Activated T-helper 2 cell treated with anti-CD3 and anti-CD28 coated beads, Interferon-gamma antibody, Interleukin-2, Interleukin-4, amounts not matched to agents 10 μg/mL and 5 μg/mL and 100 μg/mL, durations not matched to agents 14 hours and 24 hours and 36 hours (primary cell): ENCODE measurements at regions of chr3 and their contacts with region 1.

Region 1: GRCh38 chr3:12193485-12194165 is 34.9 kb upstream of the TIMP4 start:
- DNase-seq: peak; percentile 34
- H3K4me3 Mint-ChIP-seq: peak overlapping the region; percentile 54
- H3K27ac Mint-ChIP-seq: peak overlapping the region; percentile 95
- H3K4me1 Mint-ChIP-seq: peaks cover 77% of the 10 kb centered on the region
- H3K27me3 Mint-ChIP-seq: no peaks in the 10 kb centered on the region

Region 2: GRCh38 chr3:11626084-11626463 is 567.6 kb before region 1 on chr3:
- intact Hi-C with region 1: loop called (anchors 10 kb)
- DNase-seq: peak; percentile 22
- H3K4me3 Mint-ChIP-seq: peak overlapping the region; percentile 37
- H3K27ac Mint-ChIP-seq: peak overlapping the region; percentile 87
- H3K4me1 Mint-ChIP-seq: peaks cover 73% of the 10 kb centered on the region
- H3K27me3 Mint-ChIP-seq: no peaks in the 10 kb centered on the region

Region 3: DNA sequence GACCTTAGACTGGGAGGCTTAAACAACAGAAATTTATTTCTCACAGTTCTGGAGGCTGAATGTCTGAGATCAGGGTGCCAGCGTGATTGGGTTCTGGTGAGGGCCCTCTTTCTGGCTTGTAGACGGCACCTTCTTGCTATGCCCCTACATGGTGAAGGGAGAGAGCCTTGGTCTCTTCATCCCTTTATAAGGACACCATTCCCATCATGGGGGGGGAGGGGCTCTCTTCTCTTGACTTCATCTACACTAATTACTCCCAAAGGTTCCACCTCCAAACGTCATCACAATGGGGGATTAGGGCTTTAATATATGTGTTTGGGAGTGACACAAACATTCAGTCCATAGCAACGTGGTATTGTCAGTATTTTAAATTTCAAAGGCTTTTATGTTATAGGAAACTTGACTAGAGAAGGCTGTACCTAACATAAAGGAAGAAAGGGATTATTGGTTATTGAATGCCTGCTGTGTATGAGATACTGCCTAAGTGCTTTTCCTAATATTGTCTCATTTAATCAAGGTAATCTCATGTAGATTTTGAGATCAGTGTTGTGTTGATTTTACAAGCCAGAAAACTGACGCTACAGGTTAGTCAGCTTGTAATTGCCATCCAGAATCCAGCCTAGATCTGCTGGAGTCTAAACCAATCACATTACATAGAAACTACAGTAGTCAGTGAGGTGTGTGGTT is 168.5 kb before region 1 on chr3:
- intact Hi-C with region 1: no loop called
- DNase-seq: no peak
- H3K4me3 Mint-ChIP-seq: no peak overlapping the region
- H3K27ac Mint-ChIP-seq: no peak overlapping the region
- H3K4me1 Mint-ChIP-seq: no peaks in the 10 kb centered on the region
- H3K27me3 Mint-ChIP-seq: peaks cover 2% of the 10 kb centered on the region

Region 4: GRCh38 chr3:12175844-12176453 is 17.7 kb before region 1 on chr3:
- intact Hi-C with region 1: loop called (anchors 1 kb)
- DNase-seq: no peak
- H3K4me3 Mint-ChIP-seq: no peak overlapping the region
- H3K27ac Mint-ChIP-seq: no peak overlapping the region
- H3K4me1 Mint-ChIP-seq: peaks cover 21% of the 10 kb centered on the region
- H3K27me3 Mint-ChIP-seq: no peaks in the 10 kb centered on the region

Region 5: GRCh38 chr3:12221663-12222062 is 28.0 kb after region 1 on chr3:
- intact Hi-C with region 1: loop called (anchors 1 kb)
- DNase-seq: no peak
- H3K4me3 Mint-ChIP-seq: no peak overlapping the region
- H3K27ac Mint-ChIP-seq: no peak overlapping the region
- H3K4me1 Mint-ChIP-seq: peaks cover 13% of the 10 kb centered on the region
- H3K27me3 Mint-ChIP-seq: peaks cover 12% of the 10 kb centered on the region

Region 6: GRCh38 chr3:12287727-12288191 is 94.1 kb after region 1 on chr3:
- intact Hi-C with region 1: loop called (anchors 2 kb)
- DNase-seq: no peak
- H3K4me3 Mint-ChIP-seq: peak overlapping the region; percentile 76
- H3K27ac Mint-ChIP-seq: peak overlapping the region; percentile 42
- H3K4me1 Mint-ChIP-seq: peaks cover 18% of the 10 kb centered on the region
- H3K27me3 Mint-ChIP-seq: peaks cover 33% of the 10 kb centered on the region

Region 7: GRCh38 chr3:12308517-12308916 is 114.9 kb after region 1 on chr3:
- intact Hi-C with region 1: loop called (anchors 1 kb)
- DNase-seq: no peak
- H3K4me3 Mint-ChIP-seq: no peak overlapping the region
- H3K27ac Mint-ChIP-seq: peak overlapping the region; percentile 82
- H3K4me1 Mint-ChIP-seq: peaks cover 34% of the 10 kb centered on the region
- H3K27me3 Mint-ChIP-seq: peaks cover 3% of the 10 kb centered on the region

Region 8: GRCh38 chr3:13012228-13012691 is 818.6 kb after region 1 on chr3:
- intact Hi-C with region 1: loop called (anchors 5 kb)
- DNase-seq: peak; percentile 40
- H3K4me3 Mint-ChIP-seq: peak overlapping the region; percentile 74
- H3K27ac Mint-ChIP-seq: peak overlapping the region; percentile 99
- H3K4me1 Mint-ChIP-seq: peaks cover 71% of the 10 kb centered on the region
- H3K27me3 Mint-ChIP-seq: no peaks in the 10 kb centered on the region